H1 (cell line): ENCODE measurements at regions of chrX and their contacts with region 1.

Region 1: GRCh38 chrX:68579810-68580209 is 67.7 kb upstream of the STARD8 start:
- DNase-seq: no peak
- H3K4me3 ChIP-seq: no peak overlapping the region
- H3K27ac ChIP-seq: no peak overlapping the region
- H3K4me1 ChIP-seq: no peaks in the 10 kb centered on the region
- H3K27me3 ChIP-seq: no peaks in the 10 kb centered on the region
- CTCF ChIP-seq: no peak
- EP300 ChIP-seq: no peak
- POLR2A ChIP-seq: no peak
- RAD21 ChIP-seq: no peak

Region 2: DNA sequence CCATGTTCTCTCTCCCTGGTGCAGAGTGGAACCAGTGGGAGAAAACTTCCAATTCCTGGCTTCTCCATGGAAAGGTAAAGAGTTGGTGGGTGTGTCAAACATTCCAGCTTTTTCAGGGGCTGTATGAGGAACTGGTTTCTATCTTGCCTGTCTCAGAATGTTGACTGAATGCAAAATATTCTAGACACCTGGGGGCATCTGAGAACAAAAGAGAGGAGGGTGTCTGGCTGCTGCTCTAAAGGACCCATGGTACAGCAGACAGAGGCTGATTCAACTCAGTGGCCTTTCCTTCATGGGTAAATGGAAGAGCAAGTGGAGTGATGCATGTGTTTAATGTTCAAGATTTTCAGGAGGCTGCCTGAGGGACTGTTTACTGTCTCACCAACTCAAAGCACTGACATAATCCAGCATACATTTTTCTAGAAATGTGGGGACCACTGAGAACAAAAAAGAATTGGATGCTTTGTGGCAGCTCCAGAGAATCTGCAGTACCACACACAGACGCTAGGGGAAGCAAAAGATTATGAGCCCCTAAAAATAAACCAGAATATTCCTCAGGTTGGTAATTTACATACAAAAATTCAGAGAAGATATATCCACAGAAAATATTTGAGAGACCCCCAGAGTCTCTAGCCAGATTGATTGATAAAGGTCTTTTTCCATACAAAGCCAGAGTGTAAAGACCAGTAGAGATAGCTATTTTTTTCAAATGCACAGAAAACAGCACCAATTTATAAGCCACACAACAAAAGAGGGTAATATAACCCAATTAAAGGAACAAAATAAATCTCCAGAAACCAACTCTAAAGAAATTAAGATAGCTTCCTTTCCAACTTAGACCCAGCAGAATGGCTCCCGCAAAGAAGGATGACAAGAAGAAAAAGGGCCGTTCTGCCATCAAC is 19.7 kb after region 1 on chrX:
- CTCF ChIA-PET with region 1: interaction called, 15 read pairs
- POLR2A ChIA-PET with region 1: no interaction called
- DNase-seq: peak in 1 of 2 experiments; percentile 43
- H3K4me3 ChIP-seq: no peak overlapping the region
- H3K27ac ChIP-seq: no peak overlapping the region
- H3K4me1 ChIP-seq: no peaks in the 10 kb centered on the region
- H3K27me3 ChIP-seq: no peaks in the 10 kb centered on the region
- CTCF ChIP-seq: peak in 1 of 3 experiments; percentile 38; a peak in 2 of 4 replicates
- EP300 ChIP-seq: no peak
- POLR2A ChIP-seq: no peak
- RAD21 ChIP-seq: peak; percentile 20 to 34; a peak in 2 of 4 replicates